ENCODE measurements at regions of chr22 and their contacts with region 1.

Region 1: GRCh38 chr22:30326706-30327362 is at the start of gene TBC1D10A:
- DNase-seq: peak; percentile 98
- H3K4me3 Mint-ChIP-seq: peak within 1 kb of the TSS; percentile 89
- H3K27ac Mint-ChIP-seq: peak within 1 kb of the TSS; percentile 84
- H3K4me1 Mint-ChIP-seq: peaks cover 48% of the 10 kb centered on the region
- H3K27me3 Mint-ChIP-seq: no peaks in the 10 kb centered on the region
- total RNA-seq, gene TBC1D10A: 18.9 and 19.3 TPM in 2 replicates

Region 2: GRCh38 chr22:29267858-29268417 is 1058.9 kb before region 1 on chr22 and contains the starts of genes EWSR1 and RHBDD3:
- intact Hi-C with region 1: loop called (anchors 5 kb)
- DNase-seq: peak; percentile 99
- H3K4me3 Mint-ChIP-seq: peak within 1 kb of the TSS; percentile 99
- H3K27ac Mint-ChIP-seq: peak within 1 kb of the TSS; percentile 99
- H3K4me1 Mint-ChIP-seq: peaks cover 40% of the 10 kb centered on the region
- H3K27me3 Mint-ChIP-seq: peaks cover 3% of the 10 kb centered on the region
- total RNA-seq, gene EWSR1: 445 and 446 TPM in 2 replicates
- total RNA-seq, gene RHBDD3: 49.5 and 51.9 TPM in 2 replicates

Region 3: GRCh38 chr22:30262917-30263741 is 63.7 kb before region 1 on chr22:
- intact Hi-C with region 1: loop called (anchors 2 kb)
- DNase-seq: peak; percentile 95
- H3K4me3 Mint-ChIP-seq: peak overlapping the region; percentile 99
- H3K27ac Mint-ChIP-seq: peak overlapping the region; percentile 90
- H3K4me1 Mint-ChIP-seq: peaks cover 59% of the 10 kb centered on the region
- H3K27me3 Mint-ChIP-seq: no peaks in the 10 kb centered on the region

Region 4: GRCh38 chr22:30305519-30305905 is 21.3 kb before region 1 on chr22:
- intact Hi-C with region 1: loop called (anchors 1 kb)
- DNase-seq: peak; percentile 92
- H3K4me3 Mint-ChIP-seq: peak overlapping the region; percentile 73
- H3K27ac Mint-ChIP-seq: peak overlapping the region; percentile 91
- H3K4me1 Mint-ChIP-seq: peaks cover 91% of the 10 kb centered on the region
- H3K27me3 Mint-ChIP-seq: no peaks in the 10 kb centered on the region

Region 5: GRCh38 chr22:30314915-30315314 is 11.9 kb before region 1 on chr22:
- intact Hi-C with region 1: loop called (anchors 1 kb)
- DNase-seq: peak; percentile 79
- H3K4me3 Mint-ChIP-seq: peak overlapping the region; percentile 37
- H3K27ac Mint-ChIP-seq: peak overlapping the region; percentile 82
- H3K4me1 Mint-ChIP-seq: peaks cover 89% of the 10 kb centered on the region
- H3K27me3 Mint-ChIP-seq: no peaks in the 10 kb centered on the region

Region 6: DNA sequence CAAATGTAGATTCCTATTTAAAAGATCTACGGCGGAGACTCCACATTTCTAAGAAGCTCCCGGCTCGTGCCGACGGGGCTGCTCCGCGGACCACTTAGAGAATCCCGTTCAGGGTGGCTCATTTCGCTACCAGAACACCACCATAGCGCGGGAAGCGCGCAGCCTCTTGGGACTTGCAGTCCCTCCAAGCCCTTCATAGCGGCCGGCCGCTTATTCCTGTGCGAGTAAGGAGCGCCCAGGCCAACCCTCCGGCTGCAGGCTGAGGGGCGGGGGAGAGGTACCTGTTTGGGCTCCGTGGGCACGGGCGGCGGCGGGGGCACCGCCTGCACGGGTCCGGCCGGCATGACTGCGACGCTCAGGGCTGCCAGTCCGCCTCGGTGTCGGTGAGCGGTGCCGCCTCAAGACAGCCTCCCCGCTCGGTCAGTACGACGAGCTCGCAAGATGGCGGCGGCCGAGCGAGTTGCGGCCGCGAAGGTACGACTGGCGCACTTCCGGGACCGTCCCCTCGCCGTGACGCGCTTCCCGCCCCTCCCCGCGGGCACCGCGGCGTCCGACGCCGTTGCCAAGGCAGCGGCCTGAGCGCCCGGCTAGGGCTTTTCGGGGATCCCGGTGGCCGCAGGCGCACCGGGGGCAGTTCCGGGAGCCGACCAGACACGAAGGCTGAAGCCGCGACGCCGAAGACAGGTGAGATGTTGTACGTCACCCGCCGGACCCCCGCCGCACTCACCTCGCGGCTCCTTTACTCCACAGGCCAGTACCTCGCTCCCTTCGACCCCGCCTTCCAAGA is 29.8 kb after region 1 on chr22 and contains the starts of genes CCDC157 and SF3A1:
- intact Hi-C with region 1: loop called (anchors 1 kb)
- DNase-seq: peak; percentile 98
- H3K4me3 Mint-ChIP-seq: peak within 1 kb of the TSS; percentile 95
- H3K27ac Mint-ChIP-seq: peak within 1 kb of the TSS; percentile 92
- H3K4me1 Mint-ChIP-seq: peaks cover 31% of the 10 kb centered on the region
- H3K27me3 Mint-ChIP-seq: peaks cover 2% of the 10 kb centered on the region
- total RNA-seq, gene CCDC157: 2.9 and 3.2 TPM in 2 replicates
- total RNA-seq, gene SF3A1: 314 and 319 TPM in 2 replicates